ENCODE measurements at regions of chr3 and their contacts with region 1.

Region 1: GRCh38 chr3:47164007-47164881 is at the start of gene SETD2:
- DNase-seq: peak; percentile 67 to 93 (median 86)
- ATAC-seq: peak; percentile 85
- H3K4me3 ChIP-seq: peak within 1 kb of the TSS; percentile 89 to 93
- H3K4me3 Mint-ChIP-seq: peak within 1 kb of the TSS; percentile 99
- H3K27ac ChIP-seq: peak within 1 kb of the TSS; percentile 91 to 92
- H3K27ac Mint-ChIP-seq: peak within 1 kb of the TSS; percentile 97
- H3K4me1 ChIP-seq: peaks cover 44% of the 10 kb centered on the region
- H3K4me1 Mint-ChIP-seq: peaks cover 49% of the 10 kb centered on the region
- H3K27me3 ChIP-seq: no peaks in the 10 kb centered on the region
- H3K27me3 Mint-ChIP-seq: no peaks in the 10 kb centered on the region
- CTCF ChIP-seq: peak; percentile 41
- total RNA-seq, gene SETD2: 111 to 114 TPM

Region 2: GRCh38 chr3:46733026-46733800 is 431.0 kb before region 1 on chr3:
- CTCF ChIA-PET with region 1: no interaction called
- POLR2A ChIA-PET with region 1: no interaction called
- intact Hi-C with region 1: no loop called
- DNase-seq: no peak
- ATAC-seq: no peak
- H3K4me3 ChIP-seq: no peak overlapping the region
- H3K4me3 Mint-ChIP-seq: no peak overlapping the region
- H3K27ac ChIP-seq: no peak overlapping the region
- H3K27ac Mint-ChIP-seq: no peak overlapping the region
- H3K4me1 ChIP-seq: no peaks in the 10 kb centered on the region
- H3K4me1 Mint-ChIP-seq: no peaks in the 10 kb centered on the region
- H3K27me3 ChIP-seq: no peaks in the 10 kb centered on the region
- H3K27me3 Mint-ChIP-seq: peaks cover 10% of the 10 kb centered on the region
- CTCF ChIP-seq: no peak

Region 3: GRCh38 chr3:47057212-47057671 is 107.0 kb before region 1 on chr3:
- CTCF ChIA-PET with region 1: no interaction called
- POLR2A ChIA-PET with region 1: interaction called, 3 read pairs
- intact Hi-C with region 1: loop called in 1 of 2 experiments (anchors 5 kb)
- DNase-seq: peak in 8 of 9 experiments; percentile 7 to 88 (median 56)
- ATAC-seq: peak; percentile 88
- H3K4me3 ChIP-seq: no peak overlapping the region
- H3K4me3 Mint-ChIP-seq: peak overlapping the region; percentile 7
- H3K27ac ChIP-seq: peak overlapping the region; percentile 7 to 55
- H3K27ac Mint-ChIP-seq: peak overlapping the region; percentile 92
- H3K4me1 ChIP-seq: peaks cover 15% of the 10 kb centered on the region
- H3K4me1 Mint-ChIP-seq: peaks cover 39% of the 10 kb centered on the region
- H3K27me3 ChIP-seq: no peaks in the 10 kb centered on the region
- H3K27me3 Mint-ChIP-seq: no peaks in the 10 kb centered on the region
- CTCF ChIP-seq: no peak

Region 4: GRCh38 chr3:47152578-47152977 is 11.7 kb before region 1 on chr3:
- CTCF ChIA-PET with region 1: interaction called, 3 read pairs
- POLR2A ChIA-PET with region 1: interaction called, 18 read pairs
- intact Hi-C with region 1: no loop called
- DNase-seq: peak in 1 of 9 experiments; percentile 16
- ATAC-seq: no peak
- H3K4me3 ChIP-seq: no peak overlapping the region
- H3K4me3 Mint-ChIP-seq: no peak overlapping the region
- H3K27ac ChIP-seq: peak overlapping the region in 1 of 2 experiments; percentile 13
- H3K27ac Mint-ChIP-seq: no peak overlapping the region
- H3K4me1 ChIP-seq: peaks cover 59% of the 10 kb centered on the region
- H3K4me1 Mint-ChIP-seq: peaks cover 75% of the 10 kb centered on the region
- H3K27me3 ChIP-seq: no peaks in the 10 kb centered on the region
- H3K27me3 Mint-ChIP-seq: no peaks in the 10 kb centered on the region
- CTCF ChIP-seq: no peak

Region 5: GRCh38 chr3:47282424-47283192 is 118.4 kb after region 1 on chr3 and contains the starts of genes KIF9 and KLHL18:
- CTCF ChIA-PET with region 1: interaction called, 8 read pairs
- POLR2A ChIA-PET with region 1: interaction called, 5 read pairs
- intact Hi-C with region 1: loop called (anchors 1 kb)
- DNase-seq: peak; percentile 92 to 99 (median 96)
- ATAC-seq: peak; percentile 86
- H3K4me3 ChIP-seq: peak within 1 kb of the TSS; percentile 75 to 79
- H3K4me3 Mint-ChIP-seq: peak within 1 kb of the TSS; percentile 97
- H3K27ac ChIP-seq: peak within 1 kb of the TSS; percentile 98 to 99
- H3K27ac Mint-ChIP-seq: peak within 1 kb of the TSS; percentile 99
- H3K4me1 ChIP-seq: peaks cover 32% of the 10 kb centered on the region
- H3K4me1 Mint-ChIP-seq: peaks cover 40% of the 10 kb centered on the region
- H3K27me3 ChIP-seq: no peaks in the 10 kb centered on the region
- H3K27me3 Mint-ChIP-seq: no peaks in the 10 kb centered on the region
- CTCF ChIP-seq: no peak
- total RNA-seq, gene KIF9: 11.7 to 12.2 TPM
- total RNA-seq, gene KLHL18: 61.6 to 62.8 TPM

Region 6: GRCh38 chr3:47380601-47381316 is 216.5 kb after region 1 on chr3 and contains the start of gene PTPN23:
- CTCF ChIA-PET with region 1: no interaction called
- POLR2A ChIA-PET with region 1: interaction called, 12 read pairs
- intact Hi-C with region 1: loop called (anchors 1 kb)
- DNase-seq: peak; percentile 97 to 99 (median 99)
- ATAC-seq: peak; percentile 77
- H3K4me3 ChIP-seq: peak within 1 kb of the TSS; percentile 59 to 86
- H3K4me3 Mint-ChIP-seq: peak within 1 kb of the TSS; percentile 99
- H3K27ac ChIP-seq: peak within 1 kb of the TSS; percentile 76 to 97
- H3K27ac Mint-ChIP-seq: peak within 1 kb of the TSS; percentile 100
- H3K4me1 ChIP-seq: peaks cover 30% of the 10 kb centered on the region
- H3K4me1 Mint-ChIP-seq: peaks cover 49% of the 10 kb centered on the region
- H3K27me3 ChIP-seq: no peaks in the 10 kb centered on the region
- H3K27me3 Mint-ChIP-seq: no peaks in the 10 kb centered on the region
- CTCF ChIP-seq: no peak
- total RNA-seq, gene PTPN23: 39.2 to 48.3 TPM

Region 7: DNA sequence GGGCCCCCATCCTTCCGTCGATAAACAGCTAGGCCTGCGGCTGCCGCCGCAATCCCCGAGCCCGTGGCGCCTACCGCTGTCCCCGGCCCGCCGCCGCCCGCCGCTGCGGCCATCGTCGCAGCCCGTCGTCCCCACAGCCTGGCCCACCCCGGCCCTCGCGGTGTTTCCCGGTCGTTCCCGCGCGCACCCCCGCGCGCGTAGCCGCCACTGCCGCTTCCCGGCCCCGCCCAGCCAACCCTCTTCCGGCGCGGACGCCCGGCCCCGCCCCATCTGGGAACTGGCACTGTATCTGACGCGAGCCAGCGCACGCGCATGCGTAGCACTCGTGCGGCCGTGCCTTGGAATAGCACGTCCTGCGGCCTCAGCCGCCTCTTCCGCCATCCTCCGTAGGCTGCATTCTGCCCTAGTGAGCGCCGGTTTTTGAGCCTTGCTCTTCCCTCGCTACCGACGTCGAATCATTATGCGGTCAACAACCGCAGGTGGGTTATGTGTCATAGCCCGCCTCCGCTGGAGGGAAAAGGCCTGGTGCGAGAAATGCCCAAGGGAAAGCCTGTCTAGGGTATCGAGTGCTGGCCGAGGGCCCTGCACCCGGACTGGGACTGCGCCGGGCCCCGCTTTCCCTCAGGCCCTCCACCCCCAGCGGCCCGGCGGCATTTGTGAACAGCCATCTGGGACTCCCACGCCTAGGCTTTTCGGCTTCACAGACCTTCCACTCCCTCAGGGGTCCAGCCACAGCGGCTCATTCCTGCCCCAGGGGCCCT is 617.6 kb after region 1 on chr3 and contains the start of gene SMARCC1:
- CTCF ChIA-PET with region 1: no interaction called
- POLR2A ChIA-PET with region 1: no interaction called
- intact Hi-C with region 1: loop called in 1 of 2 experiments (anchors 10 kb)
- DNase-seq: peak; percentile 91 to 99 (median 97)
- ATAC-seq: peak; percentile 87
- H3K4me3 ChIP-seq: peak within 1 kb of the TSS; percentile 54 to 91
- H3K4me3 Mint-ChIP-seq: peak within 1 kb of the TSS; percentile 89
- H3K27ac ChIP-seq: peak within 1 kb of the TSS; percentile 87 to 98
- H3K27ac Mint-ChIP-seq: peak within 1 kb of the TSS; percentile 97
- H3K4me1 ChIP-seq: peaks cover 23% of the 10 kb centered on the region
- H3K4me1 Mint-ChIP-seq: peaks cover 31% of the 10 kb centered on the region
- H3K27me3 ChIP-seq: no peaks in the 10 kb centered on the region
- H3K27me3 Mint-ChIP-seq: no peaks in the 10 kb centered on the region
- CTCF ChIP-seq: no peak
- total RNA-seq, gene SMARCC1: 65.4 to 68.2 TPM

Region 8: DNA sequence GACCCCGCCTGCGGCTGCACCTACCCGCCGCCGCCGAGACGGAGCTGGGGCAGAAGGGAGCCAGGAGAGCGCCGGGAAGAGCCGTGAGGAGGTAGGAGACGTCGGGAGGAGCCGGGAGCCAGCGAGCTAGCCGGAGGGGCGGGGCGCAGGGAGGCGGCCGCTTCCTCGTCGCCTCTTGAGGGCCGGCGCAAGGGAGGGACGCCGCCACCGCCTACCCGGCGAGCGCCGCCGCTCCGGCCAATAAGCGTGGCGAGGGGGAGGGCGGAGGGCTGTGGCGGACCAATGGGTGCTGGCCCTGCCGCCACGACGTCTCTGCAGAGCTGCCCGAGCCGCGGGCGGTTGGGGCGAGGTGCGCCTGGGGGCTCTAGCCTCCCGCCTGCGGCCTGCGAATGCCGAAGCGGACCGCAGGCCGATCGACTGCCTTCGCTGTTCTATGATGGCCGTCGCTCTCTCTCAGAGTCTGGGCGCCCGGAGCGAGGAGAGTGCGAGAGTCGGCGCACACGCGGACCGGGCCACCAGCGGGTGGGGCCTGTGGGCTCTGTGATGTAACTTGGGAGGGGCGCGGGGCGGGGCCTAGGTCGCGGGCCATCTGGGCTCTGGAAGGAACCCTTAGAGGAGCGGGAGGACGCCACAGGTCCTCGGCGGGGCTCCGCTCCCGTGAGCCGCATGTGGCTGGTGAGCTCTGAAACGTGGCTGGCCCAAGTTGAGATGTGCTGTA is 924.7 kb after region 1 on chr3:
- CTCF ChIA-PET with region 1: no interaction called
- POLR2A ChIA-PET with region 1: no interaction called
- intact Hi-C with region 1: loop called in 1 of 2 experiments (anchors 2 kb)
- DNase-seq: peak; percentile 89 to 97 (median 94)
- ATAC-seq: peak; percentile 91
- H3K4me3 ChIP-seq: peak overlapping the region; percentile 80 to 100
- H3K4me3 Mint-ChIP-seq: peak overlapping the region; percentile 96
- H3K27ac ChIP-seq: peak overlapping the region; percentile 86 to 95
- H3K27ac Mint-ChIP-seq: peak overlapping the region; percentile 98
- H3K4me1 ChIP-seq: peaks cover 18% of the 10 kb centered on the region
- H3K4me1 Mint-ChIP-seq: peaks cover 33% of the 10 kb centered on the region
- H3K27me3 ChIP-seq: no peaks in the 10 kb centered on the region
- H3K27me3 Mint-ChIP-seq: no peaks in the 10 kb centered on the region
- CTCF ChIP-seq: no peak

Measured in CD8-positive, alpha-beta T cell (primary cell).